ENCODE measurements at regions of chr17 and their contacts with region 1.

Region 1: DNA sequence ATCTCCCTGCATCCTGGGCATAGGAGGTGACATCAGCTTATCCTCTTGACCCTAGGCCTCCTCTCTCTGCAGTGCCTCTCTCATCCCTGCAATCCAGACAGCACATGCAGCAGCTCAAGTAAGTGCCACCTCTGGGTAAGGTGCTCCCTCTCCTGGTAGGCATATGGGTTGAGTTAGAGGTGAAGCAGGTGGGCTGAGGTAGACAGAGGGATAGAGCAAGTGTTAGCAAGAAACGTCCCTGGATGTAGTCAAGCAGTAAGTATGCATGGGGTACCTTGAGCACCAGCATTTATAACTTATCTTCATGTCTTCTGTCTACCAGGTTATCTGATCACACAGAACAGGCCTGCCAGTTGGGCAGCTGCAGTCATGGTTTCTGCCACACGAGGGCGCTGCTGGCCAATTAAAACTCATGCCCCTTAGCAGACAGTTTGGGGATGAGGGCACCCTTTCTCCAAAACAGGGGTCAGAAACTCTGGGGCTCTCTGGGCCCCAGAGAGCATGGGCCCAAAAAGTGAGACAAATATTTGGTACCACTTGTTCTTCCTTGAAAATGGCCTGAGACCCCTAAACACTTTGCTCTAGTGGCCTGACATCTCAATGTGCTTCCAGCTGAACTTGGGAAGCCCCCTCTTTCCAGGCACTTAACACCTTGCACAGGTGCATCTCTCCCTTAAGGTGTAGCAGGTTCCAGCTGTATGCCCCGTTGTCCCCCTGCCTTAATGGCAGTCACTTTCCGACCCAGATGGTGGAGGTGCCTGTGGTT is 59.8 kb downstream of the NEUROD2 start:
- DNase-seq: peak in 6 of 7 donors; percentile 53 to 89 (median 73)
- H3K4me3 ChIP-seq: no peak overlapping the region
- H3K27ac ChIP-seq: no peak overlapping the region
- H3K4me1 ChIP-seq: no peaks in the 10 kb centered on the region
- H3K27me3 ChIP-seq: no peaks in the 10 kb centered on the region
- CTCF ChIP-seq: peak; percentile 87 to 96 (median 90)
- POLR2A ChIP-seq: no peak

Region 2: GRCh38 chr17:39450847-39451581 is 96.9 kb before region 1 on chr17 and contains the start of gene MED1:
- intact Hi-C with region 1: no loop called
- DNase-seq: peak; percentile 94 to 98 (median 96)
- H3K4me3 ChIP-seq: peak within 1 kb of the TSS; percentile 84 to 99 (median 91)
- H3K27ac ChIP-seq: peak within 1 kb of the TSS in 4 of 5 donors; percentile 58 to 90 (median 79)
- H3K4me1 ChIP-seq: peaks cover 0 to 19% of the 10 kb centered on the region in 2 donors
- H3K27me3 ChIP-seq: no peaks in the 10 kb centered on the region
- CTCF ChIP-seq: no peak
- POLR2A ChIP-seq: peak; percentile 25 to 83
- total RNA-seq, gene MED1: 13.5 to 29.4 (median 26.4) TPM

Region 3: GRCh38 chr17:39605492-39606433 is 57.9 kb after region 1 on chr17:
- intact Hi-C with region 1: no loop called
- DNase-seq: no peak
- H3K4me3 ChIP-seq: no peak overlapping the region
- H3K27ac ChIP-seq: no peak overlapping the region
- H3K4me1 ChIP-seq: peaks cover 16 to 22% of the 10 kb centered on the region in 2 donors
- H3K27me3 ChIP-seq: peaks cover 81% of the 10 kb centered on the region
- CTCF ChIP-seq: no peak
- POLR2A ChIP-seq: no peak

Region 4: DNA sequence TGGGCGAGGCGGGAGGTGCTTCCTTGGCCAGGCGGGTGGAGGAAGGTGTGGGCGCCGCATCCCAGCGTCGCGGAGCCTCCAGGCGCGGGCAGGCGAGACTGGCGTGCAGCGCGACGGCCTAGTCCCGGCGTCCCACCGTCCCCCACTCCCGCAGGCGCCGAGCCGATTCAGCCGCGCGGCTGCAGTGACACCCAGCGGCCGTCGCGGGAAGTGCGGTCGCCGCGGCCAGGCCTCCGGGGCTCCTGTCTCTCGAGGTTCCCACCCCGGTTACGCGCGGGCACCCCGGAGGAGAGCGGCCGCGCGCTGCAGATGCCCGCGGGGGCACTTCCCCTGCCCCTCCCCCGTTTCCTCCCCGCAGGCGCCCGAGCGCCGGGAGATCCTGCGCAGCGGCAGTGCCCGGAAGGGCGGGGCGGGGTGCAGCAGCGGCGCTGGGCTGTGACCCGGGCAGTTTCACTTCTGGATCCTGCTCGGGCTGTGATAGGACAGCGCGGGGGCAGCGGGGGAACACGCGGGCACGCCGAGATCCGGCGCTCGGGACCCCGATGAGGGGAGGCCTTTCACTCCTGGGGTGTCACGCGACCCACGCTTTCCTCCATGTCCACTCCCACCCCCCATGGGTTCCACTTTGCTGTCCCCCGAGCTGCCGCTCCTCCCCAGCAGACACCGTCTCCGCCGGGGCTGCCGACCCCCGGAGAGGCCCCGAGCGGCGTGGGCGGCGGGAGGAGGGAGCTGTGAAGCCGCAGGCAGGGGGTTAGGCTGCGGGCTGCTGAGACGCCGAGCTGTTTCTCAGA is 206.5 kb after region 1 on chr17:
- intact Hi-C with region 1: loop called in 1 of 2 experiments (anchors 10 kb)
- DNase-seq: peak; percentile 91 to 94 (median 93)
- H3K4me3 ChIP-seq: peak overlapping the region; percentile 7 to 73 (median 63)
- H3K27ac ChIP-seq: peak overlapping the region; percentile 52 to 91 (median 79)
- H3K4me1 ChIP-seq: peaks cover 8 to 15% of the 10 kb centered on the region in 2 donors
- H3K27me3 ChIP-seq: no peaks in the 10 kb centered on the region
- CTCF ChIP-seq: peak; percentile 63 to 99 (median 94)
- POLR2A ChIP-seq: peak; percentile 36 to 70